PC-3 (cell line): ENCODE measurements at regions of chr21 and their contacts with region 1.

Region 1: DNA sequence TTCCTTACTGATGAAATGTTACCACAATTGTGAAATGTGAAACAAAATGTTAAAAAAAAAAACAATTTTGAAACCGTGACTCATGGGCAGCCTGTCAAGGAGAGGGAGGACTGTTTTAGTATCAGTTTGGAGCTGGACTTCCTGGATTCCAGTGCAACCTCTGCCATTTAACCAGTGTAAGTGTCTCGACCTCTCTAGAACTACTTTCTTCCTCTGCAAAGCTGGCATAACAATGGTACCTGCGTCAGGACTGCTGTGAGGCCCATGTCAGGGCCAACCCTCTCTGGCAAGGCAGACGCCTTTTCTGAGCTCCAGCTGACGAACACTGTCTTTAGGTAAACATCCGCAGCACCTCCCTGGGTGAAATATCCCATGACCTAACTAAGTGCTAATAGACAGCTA is 20.9 kb downstream of the URB1 start:
- DNase-seq: peak; percentile 62
- ATAC-seq: peak; percentile 97
- H3K4me3 ChIP-seq: no peak overlapping the region
- H3K27ac ChIP-seq: peak overlapping the region; percentile 83
- H3K4me1 ChIP-seq: peaks cover 20% of the 10 kb centered on the region
- H3K27me3 ChIP-seq: no peaks in the 10 kb centered on the region
- CTCF ChIP-seq: no peak

Region 2: GRCh38 chr21:32359711-32360260 is 12.1 kb before region 1 on chr21:
- CTCF ChIA-PET with region 1: no interaction called
- POLR2A ChIA-PET with region 1: no interaction called
- intact Hi-C with region 1: no loop called
- DNase-seq: peak; percentile 49
- ATAC-seq: peak; percentile 82
- H3K4me3 ChIP-seq: no peak overlapping the region
- H3K27ac ChIP-seq: no peak overlapping the region
- H3K4me1 ChIP-seq: no peaks in the 10 kb centered on the region
- H3K27me3 ChIP-seq: no peaks in the 10 kb centered on the region
- CTCF ChIP-seq: peak; percentile 56

Region 3: DNA sequence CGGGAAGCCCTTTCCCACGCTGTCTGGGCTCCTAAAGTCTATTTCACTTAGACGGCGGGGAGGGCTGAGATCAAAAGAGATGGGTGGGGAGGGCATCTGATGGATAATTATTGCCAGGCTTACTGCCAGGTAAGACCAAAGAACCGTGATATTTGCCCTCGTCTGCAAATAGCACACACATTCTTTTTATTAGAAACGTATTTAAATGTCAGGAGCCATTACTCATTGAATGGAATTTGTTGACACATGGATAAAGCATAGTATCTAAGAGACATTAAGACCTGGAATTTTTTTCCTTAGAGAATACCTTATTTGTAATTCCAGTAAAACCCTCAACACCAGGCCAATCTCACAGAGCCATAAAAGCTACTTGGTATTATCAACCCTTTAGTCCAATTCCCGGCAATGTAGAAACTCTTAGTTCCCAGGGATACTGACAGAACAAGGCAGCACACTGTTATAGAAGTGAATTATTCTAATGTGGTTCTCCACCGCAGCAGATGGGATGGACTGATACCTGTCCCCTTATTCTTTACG is 10.3 kb after region 1 on chr21:
- CTCF ChIA-PET with region 1: no interaction called
- POLR2A ChIA-PET with region 1: interaction called, 15 read pairs
- intact Hi-C with region 1: loop called (anchors 1 kb)
- DNase-seq: peak; percentile 92
- ATAC-seq: peak; percentile 85
- H3K4me3 ChIP-seq: no peak overlapping the region
- H3K27ac ChIP-seq: peak overlapping the region; percentile 79
- H3K4me1 ChIP-seq: peaks cover 27% of the 10 kb centered on the region
- H3K27me3 ChIP-seq: no peaks in the 10 kb centered on the region
- CTCF ChIP-seq: no peak

Region 4: GRCh38 chr21:32604464-32604863 is 232.6 kb after region 1 on chr21:
- CTCF ChIA-PET with region 1: interaction called, 14 read pairs
- POLR2A ChIA-PET with region 1: no interaction called
- intact Hi-C with region 1: no loop called
- DNase-seq: no peak
- ATAC-seq: no peak
- H3K4me3 ChIP-seq: no peak overlapping the region
- H3K27ac ChIP-seq: no peak overlapping the region
- H3K4me1 ChIP-seq: no peaks in the 10 kb centered on the region; the same call in 1 of the 2 replicates
- H3K27me3 ChIP-seq: no peaks in the 10 kb centered on the region
- CTCF ChIP-seq: no peak